ENCODE measurements at regions of chr15 and their contacts with region 1.

Region 1: GRCh38 chr15:81265944-81266775 is 57.8 kb downstream of the STARD5 start:
- DNase-seq: peak; percentile 77 to 96
- H3K4me3 ChIP-seq: no peak overlapping the region
- CTCF ChIP-seq: peak in 1 of 3 donors; percentile 77
- POLR2A ChIP-seq: no peak

Region 2: GRCh38 chr15:80977627-80978036 is 288.5 kb before region 1 on chr15:
- intact Hi-C with region 1: loop called (anchors 2 kb)
- DNase-seq: peak; percentile 77 to 94
- H3K4me3 ChIP-seq: no peak overlapping the region
- CTCF ChIP-seq: no peak
- POLR2A ChIP-seq: no peak

Region 3: GRCh38 chr15:81155375-81156218 is 110.6 kb before region 1 on chr15:
- intact Hi-C with region 1: loop called (anchors 1 kb)
- DNase-seq: peak; percentile 81 to 88
- H3K4me3 ChIP-seq: no peak overlapping the region
- CTCF ChIP-seq: peak in 1 of 3 donors; percentile 24
- POLR2A ChIP-seq: no peak